ENCODE measurements at regions of chrX and their contacts with region 1.

Region 1: GRCh38 chrX:150898343-150899190 is at the start of gene CD99L2:
- DNase-seq: peak; percentile 91
- ATAC-seq: peak; percentile 91
- H3K4me3 ChIP-seq: peak within 1 kb of the TSS; percentile 8 to 79 (median 66)
- H3K4me3 Mint-ChIP-seq: peak within 1 kb of the TSS; percentile 97
- H3K27ac ChIP-seq: peak within 1 kb of the TSS; percentile 29 to 70
- H3K27ac Mint-ChIP-seq: peak within 1 kb of the TSS; percentile 88
- H3K4me1 ChIP-seq: peaks cover 0 to 10% of the 10 kb centered on the region in 2 donors
- H3K4me1 Mint-ChIP-seq: peaks cover 13% of the 10 kb centered on the region
- H3K27me3 ChIP-seq: no peaks in the 10 kb centered on the region
- H3K27me3 Mint-ChIP-seq: peaks cover 7% of the 10 kb centered on the region
- CTCF ChIP-seq: no peak
- total RNA-seq, gene CD99L2: 16.0 and 17.8 TPM in 2 replicates

Region 2: GRCh38 chrX:150568320-150569154 is 330.0 kb before region 1 on chrX and contains the start of gene MTM1:
- CTCF ChIA-PET with region 1: no interaction called
- POLR2A ChIA-PET with region 1: no interaction called
- intact Hi-C with region 1: loop called (anchors 5 kb)
- DNase-seq: peak; percentile 93
- ATAC-seq: peak; percentile 90
- H3K4me3 ChIP-seq: peak within 1 kb of the TSS; percentile 35 to 77 (median 75)
- H3K4me3 Mint-ChIP-seq: peak within 1 kb of the TSS; percentile 93
- H3K27ac ChIP-seq: peak within 1 kb of the TSS; percentile 80 to 84
- H3K27ac Mint-ChIP-seq: peak within 1 kb of the TSS; percentile 95
- H3K4me1 ChIP-seq: peaks cover 40 to 44% of the 10 kb centered on the region in 2 donors
- H3K4me1 Mint-ChIP-seq: peaks cover 45% of the 10 kb centered on the region
- H3K27me3 ChIP-seq: no peaks in the 10 kb centered on the region
- H3K27me3 Mint-ChIP-seq: no peaks in the 10 kb centered on the region
- CTCF ChIP-seq: no peak
- total RNA-seq, gene MTM1: 24.2 and 29.8 TPM in 2 replicates

Region 3: DNA sequence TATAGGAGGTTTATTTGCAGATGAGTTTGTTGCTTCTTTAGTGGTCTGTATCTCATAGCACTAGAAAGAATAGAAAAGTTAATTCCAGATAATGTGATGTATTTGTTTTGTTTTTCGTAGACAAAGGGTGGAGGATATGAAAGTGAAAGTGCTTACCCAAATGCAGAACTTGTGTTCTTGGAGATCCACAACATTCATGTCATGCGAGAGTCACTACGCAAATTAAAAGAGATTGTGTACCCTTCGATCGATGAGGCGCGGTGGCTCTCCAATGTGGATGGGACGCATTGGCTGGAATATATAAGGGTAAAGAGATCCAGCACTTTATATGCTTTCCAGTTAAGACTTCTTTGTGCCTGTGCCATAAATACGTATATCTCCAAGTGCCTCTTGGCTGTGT is 162.1 kb before region 1 on chrX:
- CTCF ChIA-PET with region 1: no interaction called
- POLR2A ChIA-PET with region 1: no interaction called
- intact Hi-C with region 1: loop called (anchors 1 kb)
- DNase-seq: peak; percentile 69
- ATAC-seq: peak; percentile 82
- H3K4me3 ChIP-seq: peak overlapping the region in 3 of 5 experiments; percentile 14 to 46 (median 28)
- H3K4me3 Mint-ChIP-seq: peak overlapping the region; percentile 80
- H3K27ac ChIP-seq: peak overlapping the region; percentile 87 to 91
- H3K27ac Mint-ChIP-seq: peak overlapping the region; percentile 94
- H3K4me1 ChIP-seq: peaks cover 15 to 18% of the 10 kb centered on the region in 2 donors
- H3K4me1 Mint-ChIP-seq: peaks cover 29% of the 10 kb centered on the region
- H3K27me3 ChIP-seq: no peaks in the 10 kb centered on the region
- H3K27me3 Mint-ChIP-seq: no peaks in the 10 kb centered on the region
- CTCF ChIP-seq: no peak

Region 4: DNA sequence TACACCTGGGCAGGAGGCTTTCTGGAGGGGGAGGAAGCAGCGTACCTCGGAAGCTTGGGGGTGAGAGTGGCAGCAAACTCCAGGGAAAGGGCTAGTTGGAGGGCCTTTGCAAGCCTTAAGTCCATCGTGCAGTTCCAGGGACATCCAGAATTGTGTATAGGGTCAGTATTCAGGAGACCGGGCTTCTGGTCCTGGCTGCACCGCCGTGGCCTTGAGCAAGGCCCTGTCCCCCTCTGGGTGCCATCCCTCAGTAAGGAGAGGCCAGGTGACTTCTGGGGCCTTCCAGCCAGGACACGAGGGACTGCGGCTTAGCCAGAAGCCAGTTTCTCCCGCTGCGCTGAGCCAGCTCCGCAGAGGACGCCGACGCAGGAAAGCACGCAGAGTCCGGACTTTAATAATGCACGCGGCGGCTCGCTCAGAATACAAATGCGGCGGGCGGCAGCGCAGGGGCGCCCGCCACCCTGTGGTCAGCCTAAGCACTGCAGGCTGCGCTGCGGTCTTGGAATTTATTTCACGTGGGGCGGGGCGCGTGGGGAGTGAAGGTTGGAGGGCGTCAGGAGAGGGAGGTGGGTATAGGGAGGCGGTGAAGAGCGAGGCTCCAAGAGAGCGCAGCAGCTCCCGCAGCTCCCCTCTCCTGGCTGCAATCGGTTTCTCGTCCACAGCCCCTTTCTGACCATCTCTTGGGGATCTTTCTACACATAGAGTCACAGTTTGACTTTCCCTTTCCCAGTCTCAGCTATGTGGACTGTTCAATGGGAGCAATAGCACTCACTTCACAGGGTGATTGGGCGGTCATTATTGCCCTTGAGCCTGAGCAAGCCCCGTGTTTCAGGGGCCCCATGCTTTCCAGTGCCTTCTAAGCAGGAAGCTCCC is 183.7 kb after region 1 on chrX:
- CTCF ChIA-PET with region 1: no interaction called
- POLR2A ChIA-PET with region 1: no interaction called
- intact Hi-C with region 1: loop called (anchors 5 kb)
- DNase-seq: peak; percentile 60
- ATAC-seq: peak; percentile 87
- H3K4me3 ChIP-seq: no peak overlapping the region
- H3K4me3 Mint-ChIP-seq: peak overlapping the region; percentile 23
- H3K27ac ChIP-seq: no peak overlapping the region
- H3K27ac Mint-ChIP-seq: no peak overlapping the region
- H3K4me1 ChIP-seq: peaks cover 5 to 8% of the 10 kb centered on the region in 2 donors
- H3K4me1 Mint-ChIP-seq: peaks cover 8% of the 10 kb centered on the region
- H3K27me3 ChIP-seq: peaks cover 0 to 13% (median 3%) of the 10 kb centered on the region in 4 experiments
- H3K27me3 Mint-ChIP-seq: peaks cover 22% of the 10 kb centered on the region
- CTCF ChIP-seq: peak; percentile 79

Measured in B cell (primary cell).